ENCODE measurements at regions of chr12 and their contacts with region 1.

Region 1: DNA sequence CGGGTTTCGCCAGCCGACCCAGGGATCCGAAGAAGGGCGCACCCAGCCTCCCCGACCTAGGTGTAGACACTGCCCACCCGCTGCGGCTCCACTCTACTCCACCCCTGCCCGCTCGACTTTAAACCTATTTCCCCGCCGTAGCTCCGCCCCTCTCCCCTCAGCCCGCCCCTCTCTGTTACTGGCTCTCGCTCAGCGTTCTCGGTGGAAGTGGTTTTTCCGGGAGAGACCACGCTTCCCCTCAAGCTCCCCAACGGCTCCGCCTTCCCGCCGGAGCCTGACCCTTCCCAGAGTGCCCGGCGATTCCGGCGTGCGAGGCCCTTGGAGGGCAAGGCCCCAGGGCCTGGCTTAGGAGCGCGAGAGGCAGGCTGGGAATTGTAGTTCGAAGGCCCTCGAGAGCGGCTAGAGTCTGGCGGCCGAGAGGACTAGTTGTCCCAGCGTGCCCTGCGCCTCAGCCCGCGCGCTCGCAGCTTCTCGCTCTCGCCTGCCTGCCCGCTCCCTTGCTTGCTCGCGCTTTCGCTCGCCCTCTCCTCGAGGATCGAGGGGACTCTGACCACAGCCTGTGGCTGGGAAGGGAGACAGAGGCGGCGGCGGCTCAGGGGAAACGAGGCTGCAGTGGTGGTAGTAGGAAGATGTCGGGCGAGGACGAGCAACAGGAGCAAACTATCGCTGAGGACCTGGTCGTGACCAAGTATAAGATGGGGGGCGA is at the start of gene PA2G4:
- DNase-seq: peak; percentile 97 to 99 (median 98)
- H3K4me3 ChIP-seq: peak within 1 kb of the TSS; percentile 20 to 98 (median 94)
- H3K27ac ChIP-seq: peak within 1 kb of the TSS in 4 of 5 donors; percentile 59 to 93 (median 76)
- H3K4me1 ChIP-seq: peaks cover 17 to 20% of the 10 kb centered on the region in 2 donors
- H3K27me3 ChIP-seq: no peaks in the 10 kb centered on the region
- CTCF ChIP-seq: no peak
- POLR2A ChIP-seq: peak; percentile 81 to 87
- total RNA-seq, gene PA2G4: 64.1 to 129 (median 106) TPM

Region 2: GRCh38 chr12:56053407-56053893 is 50.8 kb before region 1 on chr12:
- intact Hi-C with region 1: loop called in 1 of 2 experiments (anchors 5 kb)
- DNase-seq: no peak
- H3K4me3 ChIP-seq: no peak overlapping the region
- H3K27ac ChIP-seq: no peak overlapping the region
- H3K4me1 ChIP-seq: no peaks in the 10 kb centered on the region
- H3K27me3 ChIP-seq: no peaks in the 10 kb centered on the region
- CTCF ChIP-seq: no peak
- POLR2A ChIP-seq: no peak

Measured in adrenal gland (tissue), 19 donors.